SK-N-SH (cell line): ENCODE measurements at regions of chr12 and their contacts with region 1.

Region 1: GRCh38 chr12:131132118-131132892 is 178.6 kb downstream of the ADGRD1 start:
- DNase-seq: peak; percentile 89
- H3K4me3 ChIP-seq: peak overlapping the region in 1 of 2 experiments; percentile 50; a peak in 1 of 4 replicates
- H3K27ac ChIP-seq: no peak overlapping the region
- H3K4me1 ChIP-seq: peaks cover 0 to 46% of the 10 kb centered on the region in 2 experiments; a peak in 1 of 4 replicates
- H3K27me3 ChIP-seq: no peaks in the 10 kb centered on the region
- CTCF ChIP-seq: no peak
- EP300 ChIP-seq: no peak
- RAD21 ChIP-seq: peak; percentile 65

Region 2: DNA sequence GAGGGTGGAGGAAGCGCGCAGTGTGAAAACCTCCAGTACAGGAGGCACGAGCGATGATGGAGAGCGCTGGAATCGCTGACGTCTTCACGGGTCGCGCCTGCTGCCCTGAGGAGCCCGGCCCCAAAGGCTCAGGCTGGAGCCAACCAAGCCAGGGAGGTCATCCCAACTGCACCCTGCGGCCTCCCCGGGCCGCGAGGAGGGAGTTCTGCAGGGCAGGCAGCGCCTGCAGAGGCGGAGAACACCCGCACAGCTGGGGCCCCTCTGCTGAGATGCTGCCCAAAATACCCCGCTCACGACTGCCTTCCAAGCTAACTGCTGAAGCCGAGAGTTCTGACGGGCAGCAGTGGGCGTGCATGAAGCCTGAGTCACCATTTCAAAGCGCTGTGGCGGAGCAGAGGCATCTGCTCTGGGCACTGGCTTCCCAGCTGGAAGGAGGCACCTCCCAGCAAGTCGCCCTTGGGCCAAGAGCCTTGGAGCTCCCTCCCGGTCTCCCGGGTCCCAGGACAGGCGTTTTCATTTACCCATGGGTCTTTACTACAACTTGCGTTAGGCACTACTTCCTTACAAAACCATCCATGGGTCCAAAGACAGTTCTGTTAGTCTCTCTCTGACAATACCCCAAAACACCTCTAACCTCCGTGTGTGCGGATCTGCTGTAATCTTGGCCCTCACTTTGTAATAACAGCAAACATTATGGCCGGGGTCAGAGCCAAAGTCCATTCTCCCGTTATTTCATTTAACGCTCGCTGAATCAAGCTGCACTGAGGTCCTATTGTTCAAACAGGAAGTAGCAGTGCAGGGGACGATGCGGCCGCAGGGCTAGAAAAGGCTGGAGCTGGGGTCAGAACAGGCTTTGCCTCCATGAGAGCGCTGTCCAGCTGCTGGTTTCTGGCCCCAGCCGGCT is 356.1 kb before region 1 on chr12:
- CTCF ChIA-PET with region 1: no interaction called
- POLR2A ChIA-PET with region 1: no interaction called
- DNase-seq: no peak
- H3K4me3 ChIP-seq: no peak overlapping the region
- H3K27ac ChIP-seq: no peak overlapping the region
- H3K4me1 ChIP-seq: no peaks in the 10 kb centered on the region; a peak in 1 of 4 replicates
- H3K27me3 ChIP-seq: no peaks in the 10 kb centered on the region
- CTCF ChIP-seq: no peak
- EP300 ChIP-seq: no peak
- RAD21 ChIP-seq: no peak

Region 3: GRCh38 chr12:130916251-130916911 is 215.9 kb before region 1 on chr12:
- CTCF ChIA-PET with region 1: interaction called, 86 read pairs
- POLR2A ChIA-PET with region 1: no interaction called
- DNase-seq: peak; percentile 82
- H3K4me3 ChIP-seq: peak overlapping the region in 1 of 2 experiments; percentile 32; a peak in 1 of 4 replicates
- H3K27ac ChIP-seq: no peak overlapping the region
- H3K4me1 ChIP-seq: peaks cover 0 to 4% of the 10 kb centered on the region in 2 experiments; a peak in 1 of 4 replicates
- H3K27me3 ChIP-seq: no peaks in the 10 kb centered on the region
- CTCF ChIP-seq: peak; percentile 31
- EP300 ChIP-seq: no peak
- RAD21 ChIP-seq: peak; percentile 96

Region 4: DNA sequence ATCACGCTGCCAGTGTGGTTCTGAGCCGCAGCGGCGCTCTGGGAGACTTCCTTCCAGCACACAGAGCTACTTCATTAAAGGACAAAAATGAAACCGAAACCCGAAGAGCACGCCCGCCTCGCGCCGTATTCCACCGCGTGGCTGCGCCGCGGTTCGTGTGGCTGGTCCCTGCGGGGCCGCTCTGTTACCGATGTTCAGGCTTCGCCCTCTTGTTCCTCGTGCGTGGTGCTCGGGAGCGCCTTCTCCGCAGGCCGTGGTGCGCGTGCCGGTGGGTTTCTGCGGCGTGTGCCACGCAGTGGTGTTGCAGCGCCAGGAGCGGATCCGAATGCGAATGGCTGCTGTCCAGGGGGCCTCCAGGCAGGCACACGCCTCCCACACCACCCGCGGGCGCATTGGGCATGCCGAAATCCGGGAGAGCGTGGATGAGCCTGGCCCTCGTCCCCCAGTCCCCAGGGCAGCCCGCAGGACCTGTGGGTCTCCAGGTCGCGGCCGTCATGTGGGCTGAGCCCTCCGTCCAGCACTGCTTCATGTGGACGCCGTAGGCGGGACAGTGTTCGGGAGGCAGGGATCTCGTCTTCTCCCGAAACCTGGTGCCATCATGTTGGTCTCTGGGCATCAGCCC is 87.4 kb before region 1 on chr12:
- CTCF ChIA-PET with region 1: interaction called, 20 read pairs
- POLR2A ChIA-PET with region 1: no interaction called
- DNase-seq: peak; percentile 64
- H3K4me3 ChIP-seq: peak overlapping the region in 1 of 2 experiments; percentile 39; a peak in 2 of 4 replicates
- H3K27ac ChIP-seq: no peak overlapping the region
- H3K4me1 ChIP-seq: peaks cover 0 to 35% of the 10 kb centered on the region in 2 experiments; a peak in 1 of 4 replicates
- H3K27me3 ChIP-seq: no peaks in the 10 kb centered on the region
- CTCF ChIP-seq: no peak
- EP300 ChIP-seq: no peak
- RAD21 ChIP-seq: no peak

Region 5: DNA sequence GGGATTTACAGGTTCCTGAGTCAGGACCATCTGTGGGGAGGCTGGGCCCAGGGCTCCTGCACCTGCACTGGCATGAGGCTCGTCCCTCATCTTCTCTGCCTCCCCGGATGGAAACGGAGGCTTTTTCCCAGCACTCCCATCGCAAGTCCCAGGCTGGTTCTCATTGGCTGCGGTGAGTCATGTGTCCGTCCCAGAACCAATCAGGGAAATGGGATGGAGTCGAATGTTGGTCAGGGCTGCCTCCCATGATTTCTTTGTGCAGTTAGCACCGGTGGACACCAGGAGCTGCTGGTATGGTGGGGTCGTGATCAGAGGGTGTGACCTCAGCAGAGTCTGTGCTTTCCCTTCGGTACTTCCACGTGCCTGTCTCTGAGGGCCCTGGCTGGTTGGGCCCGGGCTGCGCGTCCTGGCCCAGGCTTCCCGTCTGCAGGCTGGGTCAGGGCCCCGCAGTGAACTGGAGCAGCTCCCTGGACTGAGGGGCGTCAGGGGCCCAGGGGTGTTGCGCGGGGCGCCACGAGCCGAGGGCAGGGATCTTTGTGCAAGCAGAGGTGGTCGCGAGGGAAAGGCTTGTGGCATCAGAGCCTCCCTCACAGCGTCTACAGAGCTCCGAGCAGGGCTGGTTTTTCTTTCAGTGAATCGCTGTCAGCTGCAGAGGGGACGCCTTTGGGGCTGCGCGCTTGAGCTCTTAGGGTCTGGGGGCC is 10.4 kb before region 1 on chr12:
- CTCF ChIA-PET with region 1: interaction called, 135 read pairs
- POLR2A ChIA-PET with region 1: no interaction called
- DNase-seq: no peak
- H3K4me3 ChIP-seq: no peak overlapping the region
- H3K27ac ChIP-seq: no peak overlapping the region
- H3K4me1 ChIP-seq: no peaks in the 10 kb centered on the region; a peak in 1 of 4 replicates
- H3K27me3 ChIP-seq: no peaks in the 10 kb centered on the region
- CTCF ChIP-seq: no peak
- EP300 ChIP-seq: no peak
- RAD21 ChIP-seq: no peak

Region 6: DNA sequence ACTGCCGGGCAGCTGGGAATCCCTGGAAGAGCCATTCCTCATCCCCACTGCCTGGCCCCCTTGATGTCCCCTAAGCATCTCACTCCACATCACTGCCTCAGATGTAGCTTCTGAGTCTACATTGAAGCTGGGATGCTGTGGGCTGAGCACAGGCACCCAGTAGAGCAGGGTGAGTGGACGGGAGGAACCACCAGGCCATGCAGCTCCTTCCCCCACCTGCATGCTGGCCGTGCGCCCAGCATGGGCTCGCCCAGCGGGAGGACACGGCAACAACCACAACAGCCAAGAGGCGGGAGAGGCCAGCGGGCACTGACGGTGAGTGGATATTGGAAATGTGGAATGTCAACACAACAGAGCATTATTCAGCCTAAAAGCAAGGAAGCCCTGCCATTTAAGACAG is 132.3 kb after region 1 on chr12:
- CTCF ChIA-PET with region 1: no interaction called
- POLR2A ChIA-PET with region 1: no interaction called
- DNase-seq: no peak
- H3K4me3 ChIP-seq: no peak overlapping the region
- H3K27ac ChIP-seq: no peak overlapping the region
- H3K4me1 ChIP-seq: peaks cover 0 to 13% of the 10 kb centered on the region in 2 experiments; a peak in 1 of 4 replicates
- H3K27me3 ChIP-seq: no peaks in the 10 kb centered on the region
- CTCF ChIP-seq: no peak
- EP300 ChIP-seq: no peak
- RAD21 ChIP-seq: no peak

Region 7: DNA sequence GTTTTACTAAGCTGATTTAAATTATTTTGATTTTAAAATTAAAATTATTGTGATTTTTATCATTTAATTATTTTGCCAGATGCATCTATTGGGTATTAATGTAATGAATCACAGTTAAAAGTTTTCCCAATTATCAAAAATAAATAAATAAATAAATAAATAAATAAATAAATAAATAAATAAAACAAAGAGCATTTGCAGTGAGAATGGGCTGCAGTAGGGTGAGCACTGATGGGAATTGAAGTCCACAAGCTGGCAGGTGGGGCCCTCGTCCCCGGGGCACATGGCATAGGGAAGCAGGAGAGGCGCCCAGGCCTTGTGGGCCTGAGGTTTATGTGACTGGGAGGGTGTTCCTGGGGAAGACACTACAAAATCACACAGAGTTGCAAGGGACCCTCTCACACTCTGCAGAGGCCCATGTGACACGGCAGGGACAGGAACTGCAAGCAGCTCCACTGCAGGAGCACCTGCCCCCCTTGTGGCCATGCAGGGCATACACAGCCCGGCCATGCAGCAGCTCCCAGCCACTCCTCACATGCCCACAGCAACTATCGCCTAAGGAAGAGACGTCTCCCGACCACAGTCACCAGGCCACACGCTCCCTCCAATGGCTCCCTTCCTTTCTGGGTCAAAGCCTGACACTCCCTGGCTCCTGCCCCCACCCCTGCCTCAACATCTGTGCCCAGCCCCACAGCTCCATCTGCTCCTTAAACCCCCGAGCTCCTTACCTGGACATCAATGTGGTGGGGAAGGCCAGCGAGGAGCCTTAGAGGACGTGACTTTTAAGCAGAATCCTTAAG is 322.3 kb after region 1 on chr12:
- CTCF ChIA-PET with region 1: interaction called, 38 read pairs
- POLR2A ChIA-PET with region 1: no interaction called
- DNase-seq: peak; percentile 90
- H3K4me3 ChIP-seq: no peak overlapping the region
- H3K27ac ChIP-seq: no peak overlapping the region
- H3K4me1 ChIP-seq: peaks cover 0 to 4% of the 10 kb centered on the region in 2 experiments; a peak in 1 of 4 replicates
- H3K27me3 ChIP-seq: no peaks in the 10 kb centered on the region
- CTCF ChIP-seq: no peak
- EP300 ChIP-seq: no peak
- RAD21 ChIP-seq: peak; percentile 80